ENCODE measurements at regions of chr3 and their contacts with region 1.

Region 1: DNA sequence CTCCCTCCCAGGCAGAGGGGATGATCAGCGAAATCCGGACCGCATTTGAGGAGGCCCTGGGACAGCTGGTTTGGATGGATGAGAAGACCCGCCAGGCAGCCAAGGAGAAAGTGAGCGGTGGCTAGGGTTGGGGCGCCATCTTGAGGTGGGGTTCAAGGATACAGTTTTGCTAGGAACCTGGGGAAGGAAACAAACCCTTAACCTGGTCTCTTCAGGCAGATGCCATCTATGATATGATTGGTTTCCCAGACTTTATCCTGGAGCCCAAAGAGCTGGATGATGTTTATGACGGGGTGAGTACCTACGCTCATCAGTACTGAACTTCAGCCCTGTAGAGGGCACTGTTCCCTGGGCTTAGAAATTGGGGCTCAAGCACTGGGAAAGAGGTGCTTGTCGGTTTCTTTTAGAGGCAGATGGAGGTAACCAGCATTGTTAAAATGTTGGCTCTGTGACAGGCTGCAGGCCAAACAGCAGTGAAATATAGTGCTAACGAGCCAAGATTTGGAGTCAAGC is 9.6 kb upstream of the PSMD2 start:
- DNase-seq: peak; percentile 90
- H3K4me3 Mint-ChIP-seq: no peak overlapping the region
- H3K27ac Mint-ChIP-seq: no peak overlapping the region
- H3K4me1 Mint-ChIP-seq: no peaks in the 10 kb centered on the region
- H3K27me3 Mint-ChIP-seq: peaks cover 72% of the 10 kb centered on the region
- CTCF ChIP-seq: peak; percentile 97

Region 2: GRCh38 chr3:183635431-183636220 is 653.9 kb before region 1 on chr3 and contains the start of gene KLHL24:
- CTCF ChIA-PET with region 1: no interaction called
- intact Hi-C with region 1: no loop called
- DNase-seq: peak; percentile 98
- H3K4me3 Mint-ChIP-seq: peak within 1 kb of the TSS; percentile 99
- H3K27ac Mint-ChIP-seq: peak within 1 kb of the TSS; percentile 85
- H3K4me1 Mint-ChIP-seq: peaks cover 21% of the 10 kb centered on the region
- H3K27me3 Mint-ChIP-seq: peaks cover 1% of the 10 kb centered on the region
- CTCF ChIP-seq: peak; percentile 32
- total RNA-seq, gene KLHL24: 38.2 and 42.7 TPM in 2 replicates

Region 3: GRCh38 chr3:184250167-184250828 is 39.2 kb before region 1 on chr3:
- CTCF ChIA-PET with region 1: interaction called, 3 read pairs
- intact Hi-C with region 1: loop called (anchors 2 kb)
- DNase-seq: peak; percentile 98
- H3K4me3 Mint-ChIP-seq: peak overlapping the region; percentile 92
- H3K27ac Mint-ChIP-seq: peak overlapping the region; percentile 97
- H3K4me1 Mint-ChIP-seq: peaks cover 8% of the 10 kb centered on the region
- H3K27me3 Mint-ChIP-seq: no peaks in the 10 kb centered on the region
- CTCF ChIP-seq: peak; percentile 96

Region 4: DNA sequence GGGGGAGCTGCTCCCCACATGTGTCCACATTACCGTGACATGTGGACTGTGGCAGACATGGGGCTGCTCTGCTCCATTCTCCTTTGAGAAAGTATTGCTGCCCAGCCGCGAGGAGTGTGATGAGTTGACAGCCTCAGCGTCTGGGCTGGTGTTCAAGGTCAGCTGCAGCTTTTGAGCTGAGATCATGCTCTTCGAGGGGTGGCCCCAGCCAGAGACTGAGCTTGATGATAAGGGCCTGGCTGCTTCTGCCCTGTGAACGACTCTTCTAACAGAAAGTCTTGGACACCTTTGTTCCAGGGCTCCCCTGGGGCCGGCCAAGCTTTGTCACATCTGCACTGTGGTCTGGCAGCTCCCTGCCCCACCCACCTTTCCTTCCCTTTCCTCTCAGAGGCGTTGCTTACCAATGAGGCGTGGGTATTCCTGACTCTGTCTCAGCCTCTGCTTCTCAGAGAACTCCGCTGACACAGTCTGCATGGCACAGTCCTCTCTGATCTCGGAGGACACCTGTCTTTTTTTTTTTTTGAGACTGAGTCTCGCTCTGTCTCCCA is 177.0 kb after region 1 on chr3:
- CTCF ChIA-PET with region 1: no interaction called
- intact Hi-C with region 1: no loop called
- DNase-seq: no peak
- H3K4me3 Mint-ChIP-seq: no peak overlapping the region
- H3K27ac Mint-ChIP-seq: no peak overlapping the region
- H3K4me1 Mint-ChIP-seq: no peaks in the 10 kb centered on the region
- H3K27me3 Mint-ChIP-seq: peaks cover 91% of the 10 kb centered on the region
- CTCF ChIP-seq: no peak